Psoas muscle (tissue), 8 donors: ENCODE measurements at regions of chr7 and their contacts with region 1.

Region 1: DNA sequence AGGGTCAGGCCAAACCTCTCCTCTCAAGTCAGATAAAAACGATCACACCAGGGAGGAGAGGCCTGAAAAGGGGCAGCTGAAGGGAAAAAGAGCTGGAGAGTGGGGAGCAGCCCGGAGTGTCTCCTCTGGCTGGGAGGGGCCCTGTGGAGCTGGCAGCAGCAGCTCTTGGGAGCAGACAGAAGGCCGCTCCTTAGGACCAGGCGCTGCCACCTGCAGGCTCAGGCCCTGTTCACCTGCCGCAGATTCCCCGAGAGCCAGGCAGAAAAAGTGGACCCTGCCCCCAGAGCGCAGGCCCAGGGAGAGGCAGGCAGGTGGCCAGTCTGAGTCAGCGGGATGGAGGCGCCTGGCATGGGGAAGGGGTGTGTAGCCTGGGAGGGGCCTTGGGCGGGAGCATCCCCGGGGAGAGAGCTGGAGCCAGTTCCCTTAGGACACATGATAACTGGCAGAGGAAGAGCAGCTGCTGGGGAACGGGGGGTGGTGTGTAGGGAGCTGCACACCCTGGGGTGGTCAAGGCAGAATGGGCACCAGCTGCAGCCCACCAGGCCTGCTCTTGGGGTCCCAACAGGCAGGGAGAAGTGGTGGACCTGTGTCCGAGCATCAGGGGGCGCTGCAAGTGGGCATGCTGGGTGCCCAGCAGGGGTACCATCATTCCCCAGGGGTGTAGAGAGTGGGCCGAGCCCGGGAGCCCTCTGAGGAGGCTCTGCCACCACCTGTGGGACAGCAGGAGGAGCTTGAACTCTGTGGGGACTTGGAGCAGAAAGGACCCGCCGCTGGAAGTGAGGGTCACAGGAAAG is 177.2 kb upstream of the RHEB start:
- DNase-seq: peak in 1 of 2 donors; percentile 48
- ATAC-seq: no peak
- H3K4me3 ChIP-seq: no peak overlapping the region
- H3K27ac ChIP-seq: no peak overlapping the region
- H3K4me1 ChIP-seq: peaks cover 25% of the 10 kb centered on the region
- H3K27me3 ChIP-seq: no peaks in the 10 kb centered on the region
- CTCF ChIP-seq: no peak

Region 2: DNA sequence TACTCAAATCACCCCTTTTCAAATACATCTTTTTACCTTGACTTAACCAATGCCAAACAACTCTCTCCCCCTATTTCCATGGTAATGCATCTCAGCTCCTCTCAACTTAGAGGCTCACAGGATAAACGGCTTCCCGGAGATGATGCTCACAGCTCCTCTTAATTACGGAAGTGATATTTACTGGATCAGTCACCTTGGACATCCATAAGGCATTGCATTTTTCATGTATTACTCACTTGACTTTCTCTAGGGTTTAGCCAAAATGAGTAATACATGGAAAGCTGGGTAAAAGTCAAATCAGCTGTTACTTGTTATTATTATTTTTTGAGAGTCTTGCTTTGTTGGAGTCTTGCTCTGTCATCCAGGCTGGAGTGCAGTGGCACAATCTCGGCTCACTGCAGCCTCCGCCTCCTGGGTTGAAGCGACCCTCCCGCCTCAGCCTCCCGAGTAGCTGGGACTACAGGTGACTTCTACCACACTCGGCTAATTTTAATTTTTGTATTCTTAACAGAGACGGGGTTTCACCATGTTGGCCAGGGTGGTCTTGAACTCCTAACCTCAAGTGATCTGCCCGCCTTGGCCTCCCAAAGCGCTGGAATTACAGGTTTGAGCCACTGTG is 103.9 kb before region 1 on chr7:
- intact Hi-C with region 1: no loop called
- DNase-seq: no peak
- ATAC-seq: peak in 1 of 4 donors; percentile 58
- H3K4me3 ChIP-seq: no peak overlapping the region
- H3K27ac ChIP-seq: no peak overlapping the region
- H3K4me1 ChIP-seq: no peaks in the 10 kb centered on the region
- H3K27me3 ChIP-seq: no peaks in the 10 kb centered on the region
- CTCF ChIP-seq: no peak

Region 3: DNA sequence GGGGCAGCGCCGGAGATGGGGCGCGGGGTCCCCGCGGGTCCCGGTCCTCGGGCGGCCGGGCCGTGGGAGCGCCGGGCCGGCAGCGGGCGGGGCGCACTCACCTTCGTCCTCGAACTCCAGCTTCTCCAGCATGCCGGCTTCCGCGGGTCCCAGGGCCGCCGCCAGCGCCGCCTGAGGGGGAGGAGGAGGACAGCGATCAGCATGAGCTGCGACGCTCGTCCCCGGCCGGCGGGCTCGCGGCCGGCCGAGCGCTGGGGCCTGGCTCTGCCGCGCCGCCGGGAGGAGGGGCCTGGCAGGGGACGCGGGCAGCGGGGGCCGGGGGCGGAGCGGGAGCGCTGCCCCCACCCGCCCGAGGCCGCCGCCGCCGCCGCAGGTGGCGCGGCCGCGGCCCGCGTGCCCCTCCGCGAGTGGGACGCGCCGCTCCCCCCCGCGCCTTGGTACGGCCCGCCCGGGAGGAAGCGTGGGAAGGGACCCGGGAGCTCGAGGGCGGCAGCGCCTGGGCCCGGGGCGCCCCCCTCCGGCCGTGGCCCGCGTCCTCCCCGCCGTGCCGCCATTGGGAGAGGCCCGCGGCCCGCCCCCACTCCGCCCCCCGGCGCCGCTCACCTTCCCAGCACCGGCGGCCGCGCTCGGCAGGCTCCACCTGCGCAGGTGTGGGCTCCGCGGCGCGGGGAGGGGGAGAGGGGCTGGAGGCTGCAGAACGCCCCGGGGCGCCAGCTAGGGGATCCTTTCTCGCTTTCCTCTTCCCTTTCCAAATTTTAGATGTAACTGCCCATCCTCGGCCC is 64.8 kb before region 1 on chr7:
- intact Hi-C with region 1: loop called in 1 of 2 experiments (anchors 5 kb)
- DNase-seq: peak; percentile 86 to 88
- ATAC-seq: peak; percentile 80 to 86 (median 84)
- H3K4me3 ChIP-seq: peak overlapping the region; percentile 80
- H3K27ac ChIP-seq: peak overlapping the region; percentile 78
- H3K4me1 ChIP-seq: peaks cover 9% of the 10 kb centered on the region
- H3K27me3 ChIP-seq: no peaks in the 10 kb centered on the region
- CTCF ChIP-seq: no peak

Region 4: DNA sequence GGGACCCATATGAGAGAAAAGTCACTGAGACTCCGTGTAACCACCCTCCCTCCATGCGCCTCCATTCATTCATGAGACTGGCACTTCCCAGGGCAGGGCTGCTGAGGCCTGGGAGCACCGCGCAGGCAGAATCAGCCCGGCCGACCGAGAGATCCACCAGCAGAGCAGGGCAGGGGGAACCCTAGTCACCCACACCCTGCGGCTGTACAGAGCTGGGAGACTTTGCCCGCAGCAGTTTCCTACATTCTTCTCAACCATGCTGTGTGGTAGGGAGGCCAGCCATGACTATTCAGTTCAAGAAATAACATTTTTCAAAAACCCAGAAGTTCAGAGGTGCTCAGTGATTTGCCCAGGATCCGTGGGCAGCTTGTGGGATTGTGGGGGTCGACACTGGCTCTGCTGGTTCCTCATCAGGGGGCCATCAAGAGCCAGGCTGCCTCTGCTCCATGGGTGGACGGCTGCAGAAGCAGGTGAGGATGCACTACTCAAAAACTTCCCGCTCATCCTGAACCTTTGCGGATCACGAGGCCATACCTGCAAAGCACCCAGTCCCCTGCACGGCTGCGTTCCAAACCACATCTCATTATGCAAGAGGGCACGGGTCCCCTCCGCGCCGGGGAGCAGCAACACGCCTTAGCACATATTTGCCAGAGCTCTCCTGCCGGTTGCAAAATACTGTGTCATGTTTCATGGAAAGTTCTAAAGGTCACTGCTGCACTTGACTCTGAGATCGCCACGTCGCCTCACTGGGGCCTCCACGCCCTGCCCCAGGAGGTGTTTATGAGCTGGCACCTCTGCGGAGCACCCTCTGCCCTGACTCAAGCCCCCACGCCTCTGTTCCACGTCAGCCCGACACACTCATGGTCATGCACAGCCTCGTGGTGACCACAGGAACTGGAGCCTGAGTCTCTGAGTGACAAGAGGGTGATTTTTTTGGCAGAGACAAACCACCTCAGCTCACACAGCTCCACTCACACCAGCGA is 48.0 kb after region 1 on chr7:
- intact Hi-C with region 1: loop called (anchors 5 kb)
- DNase-seq: peak; percentile 84 to 96
- ATAC-seq: peak; percentile 92 to 96 (median 95)
- H3K4me3 ChIP-seq: peak overlapping the region; percentile 42
- H3K27ac ChIP-seq: peak overlapping the region; percentile 59
- H3K4me1 ChIP-seq: peaks cover 38% of the 10 kb centered on the region
- H3K27me3 ChIP-seq: peaks cover 0 to 1% (median 0%) of the 10 kb centered on the region in 3 donors
- CTCF ChIP-seq: peak; percentile 37

Region 5: DNA sequence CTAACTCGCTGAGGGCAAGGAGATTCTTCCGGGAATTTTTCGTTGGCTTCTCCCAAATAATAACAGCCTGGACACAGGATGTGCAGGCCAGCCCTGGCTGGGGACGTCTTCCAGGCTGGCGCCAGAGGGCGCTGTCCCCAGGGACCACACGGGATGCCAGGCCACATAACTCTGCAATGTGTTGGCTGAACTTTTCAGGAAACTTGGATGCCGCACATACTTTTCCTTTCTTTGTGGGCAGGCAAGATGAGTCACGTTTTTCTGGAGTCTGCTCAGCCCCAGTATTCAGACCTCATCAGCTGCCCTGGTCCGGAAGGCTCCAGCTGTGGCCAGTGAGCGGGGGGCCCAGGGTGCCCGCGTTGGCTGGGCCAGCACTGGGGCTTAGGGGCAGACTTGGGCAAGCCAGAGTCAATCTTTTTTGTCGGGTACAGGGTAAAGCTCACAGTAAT is 57.2 kb after region 1 on chr7:
- intact Hi-C with region 1: loop called in 1 of 2 experiments (anchors 5 kb)
- DNase-seq: peak; percentile 86 to 93
- ATAC-seq: peak; percentile 93 to 98 (median 96)
- H3K4me3 ChIP-seq: no peak overlapping the region
- H3K27ac ChIP-seq: peak overlapping the region; percentile 59
- H3K4me1 ChIP-seq: peaks cover 11% of the 10 kb centered on the region
- H3K27me3 ChIP-seq: no peaks in the 10 kb centered on the region
- CTCF ChIP-seq: peak; percentile 88

Region 6: GRCh38 chr7:152035817-152036216 is 338.9 kb after region 1 on chr7:
- intact Hi-C with region 1: no loop called
- DNase-seq: no peak
- ATAC-seq: no peak
- H3K4me3 ChIP-seq: no peak overlapping the region
- H3K27ac ChIP-seq: no peak overlapping the region
- H3K4me1 ChIP-seq: peaks cover 2% of the 10 kb centered on the region
- H3K27me3 ChIP-seq: no peaks in the 10 kb centered on the region
- CTCF ChIP-seq: no peak